Posterior cingulate gyrus (tissue), 11 donors: ENCODE measurements at regions of chr4 and their contacts with region 1.

Region 1: GRCh38 chr4:183840311-183840710 is 64.8 kb upstream of the STOX2 start:
- DNase-seq: peak; percentile 67 to 97 (median 92)

Region 2: DNA sequence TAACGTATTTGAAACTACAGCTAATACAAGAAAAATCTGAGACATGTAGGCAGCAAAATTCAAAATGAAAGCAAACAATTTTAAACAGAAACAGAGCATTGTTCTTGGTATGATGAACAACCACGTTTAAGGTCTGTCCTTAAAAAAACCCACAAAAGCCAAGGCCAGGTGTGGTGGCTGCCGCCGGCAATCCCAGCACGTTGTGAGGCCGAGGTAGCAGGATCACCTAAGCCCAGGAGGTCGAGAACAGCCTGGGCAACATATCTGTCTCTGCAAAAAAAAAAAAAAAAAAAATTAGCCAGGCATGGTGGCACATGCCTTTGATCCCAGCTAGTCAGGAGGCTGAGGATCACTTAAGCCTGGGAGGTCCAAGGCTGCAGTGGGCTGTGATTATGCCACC is 195.0 kb before region 1 on chr4:
- intact Hi-C with region 1: no loop called
- DNase-seq: no peak

Region 3: GRCh38 chr4:184100297-184100885 is 260.1 kb after region 1 on chr4:
- intact Hi-C with region 1: loop called (anchors 2 kb)
- DNase-seq: peak in 5 of 10 donors; percentile 39 to 90 (median 53)

Region 4: GRCh38 chr4:184250795-184251669 is 410.7 kb after region 1 on chr4:
- intact Hi-C with region 1: loop called (anchors 5 kb)
- DNase-seq: no peak